ENCODE measurements at regions of chr3 and their contacts with region 1.

Region 1: DNA sequence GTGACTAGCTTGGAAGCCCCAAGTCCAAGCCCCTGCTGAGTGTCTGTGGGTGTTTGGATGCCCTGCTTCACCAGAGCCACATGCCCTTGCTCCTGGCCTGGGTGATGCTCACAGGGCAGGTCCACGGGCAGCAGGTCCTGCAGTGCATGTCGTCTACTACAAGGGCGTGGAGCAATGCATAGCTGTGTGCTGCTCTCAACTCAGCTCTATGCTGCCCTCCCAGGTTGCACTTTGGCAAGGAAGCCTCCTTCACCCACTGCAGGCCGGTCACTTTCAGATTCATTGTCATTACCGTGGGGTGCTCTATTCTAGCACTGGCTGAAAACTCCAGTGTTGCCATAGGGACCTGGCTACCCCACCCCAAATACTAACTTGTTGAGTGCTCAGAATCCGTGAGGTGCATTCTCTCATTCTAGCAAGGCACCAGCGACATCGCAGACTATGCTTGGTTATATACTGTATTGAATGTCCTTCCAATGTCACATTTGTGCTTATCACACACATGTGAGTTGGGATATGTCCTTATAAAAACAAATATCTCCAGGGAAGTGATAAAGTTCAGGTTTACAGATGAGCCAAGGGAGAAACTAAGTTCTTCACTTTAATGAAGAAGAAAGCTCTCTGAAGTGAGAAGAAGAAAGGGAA is 51.8 kb downstream of the GRAMD1C start:
- DNase-seq: peak; percentile 27 to 43
- H3K4me3 ChIP-seq: no peak overlapping the region
- H3K4me3 Mint-ChIP-seq: no peak overlapping the region
- H3K27ac Mint-ChIP-seq: no peak overlapping the region
- H3K4me1 ChIP-seq: no peaks in the 10 kb centered on the region
- H3K4me1 Mint-ChIP-seq: no peaks in the 10 kb centered on the region
- H3K27me3 ChIP-seq: no peaks in the 10 kb centered on the region
- H3K27me3 Mint-ChIP-seq: no peaks in the 10 kb centered on the region
- CTCF ChIP-seq: no peak

Region 2: DNA sequence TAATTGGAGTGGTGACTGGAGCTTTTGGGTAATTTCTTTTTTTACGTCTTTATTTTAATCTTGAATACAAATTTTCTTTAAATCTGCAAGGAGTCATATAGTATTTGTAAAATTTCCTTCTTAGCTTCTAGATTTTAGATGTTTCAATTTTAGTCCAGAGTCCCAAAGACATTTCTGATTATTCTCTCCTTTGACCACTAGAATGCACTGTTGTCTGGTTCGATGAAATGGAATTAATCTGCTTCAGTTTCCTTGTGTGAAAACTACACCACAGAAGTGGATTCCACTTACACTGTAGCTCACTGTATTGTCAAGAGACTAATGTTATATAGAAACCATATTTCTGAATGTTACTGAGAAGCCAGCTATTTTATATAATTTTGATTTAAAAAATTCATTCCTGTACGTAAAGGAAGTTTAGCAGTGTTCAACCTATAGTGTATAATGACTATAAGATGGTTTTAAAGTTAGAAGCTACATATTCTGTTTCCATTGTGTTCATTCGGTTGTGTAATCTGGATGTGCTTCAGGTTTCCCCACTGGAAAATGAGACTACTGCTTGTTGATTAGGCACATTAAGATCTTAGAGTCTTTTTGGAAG is 45.7 kb before region 1 on chr3:
- CTCF ChIA-PET with region 1: interaction called, 11 read pairs
- POLR2A ChIA-PET with region 1: no interaction called
- intact Hi-C with region 1: loop called (anchors 1 kb)
- DNase-seq: peak in 1 of 2 experiments; percentile 21
- H3K4me3 ChIP-seq: no peak overlapping the region
- H3K4me3 Mint-ChIP-seq: no peak overlapping the region
- H3K27ac Mint-ChIP-seq: no peak overlapping the region
- H3K4me1 ChIP-seq: peaks cover 8% of the 10 kb centered on the region
- H3K4me1 Mint-ChIP-seq: peaks cover 7% of the 10 kb centered on the region
- H3K27me3 ChIP-seq: no peaks in the 10 kb centered on the region
- H3K27me3 Mint-ChIP-seq: no peaks in the 10 kb centered on the region
- CTCF ChIP-seq: peak; percentile 57 to 58